H1 (cell line): ENCODE measurements at regions of chr6 and their contacts with region 1.

Region 1: DNA sequence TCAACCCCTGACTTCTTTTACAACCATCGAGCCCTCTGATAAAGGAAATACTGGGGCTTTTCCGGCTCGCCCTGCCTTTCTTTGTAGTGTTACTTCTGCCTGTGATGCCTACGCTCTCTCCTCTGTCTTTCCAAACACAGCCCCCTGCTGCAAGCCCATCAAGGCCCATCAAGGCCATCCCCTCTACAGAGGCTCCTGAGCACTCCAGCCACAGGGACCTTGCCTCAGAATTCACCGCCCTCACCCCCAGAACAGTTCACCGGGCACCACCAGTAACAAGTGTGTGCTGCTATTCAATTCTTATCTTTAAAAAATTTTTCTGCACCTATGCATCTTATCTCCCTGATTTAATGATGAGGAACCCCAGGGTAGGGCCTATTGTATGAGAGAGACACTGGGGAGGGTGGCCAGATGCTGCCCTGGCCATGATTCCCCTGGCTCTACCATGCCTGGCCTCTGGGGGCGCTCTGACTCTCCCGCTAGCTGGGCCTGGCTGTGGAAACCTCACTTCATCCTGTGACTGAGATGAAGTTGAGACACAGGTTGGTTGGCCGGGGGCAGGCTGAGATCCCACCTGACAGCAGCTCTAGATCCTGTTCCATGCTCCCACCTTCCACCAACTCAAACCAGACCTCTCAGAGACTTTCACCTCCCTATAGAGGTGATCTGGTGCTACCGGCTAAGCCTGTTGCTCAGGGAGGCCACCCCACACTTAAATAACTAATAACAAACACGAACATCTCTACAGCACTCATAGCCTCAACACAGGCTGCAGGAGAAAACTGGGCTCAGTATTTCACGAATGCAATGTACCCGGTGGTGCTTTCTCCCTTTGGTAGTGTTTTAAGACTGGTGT is 19.2 kb upstream of the GLP1R start:
- DNase-seq: peak in 1 of 2 experiments; percentile 93
- H3K4me3 ChIP-seq: no peak overlapping the region
- H3K27ac ChIP-seq: no peak overlapping the region
- H3K4me1 ChIP-seq: peaks cover 0 to 4% (median 0%) of the 10 kb centered on the region in 4 experiments; a peak in 1 of 7 replicates
- H3K27me3 ChIP-seq: no peaks in the 10 kb centered on the region; a peak in 1 of 7 replicates
- CTCF ChIP-seq: peak; percentile 81 to 97 (median 97)
- EP300 ChIP-seq: no peak
- POLR2A ChIP-seq: no peak
- RAD21 ChIP-seq: peak; percentile 70 to 79

Region 2: DNA sequence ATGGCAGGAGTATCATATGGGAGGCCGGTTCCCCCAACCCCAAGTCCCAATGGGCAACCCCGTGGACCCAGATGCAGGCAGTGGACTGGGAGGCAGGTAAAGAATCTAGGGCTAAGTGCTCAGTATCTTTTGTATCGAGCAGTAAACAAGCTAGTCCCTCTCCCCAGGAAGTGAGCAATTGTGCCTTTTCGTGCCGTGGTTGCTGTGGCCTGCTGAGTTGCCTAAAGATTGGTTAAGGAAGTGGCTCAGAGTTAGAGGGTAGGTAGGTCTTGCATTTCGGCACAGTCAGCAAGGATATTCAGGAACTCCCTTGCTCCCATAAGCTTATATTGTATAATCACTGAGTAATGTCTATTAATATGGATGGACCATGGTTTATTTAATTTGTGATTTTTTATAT is 315.6 kb before region 1 on chr6:
- CTCF ChIA-PET with region 1: no interaction called
- POLR2A ChIA-PET with region 1: no interaction called
- DNase-seq: no peak
- H3K4me3 ChIP-seq: no peak overlapping the region
- H3K27ac ChIP-seq: no peak overlapping the region
- H3K4me1 ChIP-seq: no peaks in the 10 kb centered on the region
- H3K27me3 ChIP-seq: peaks cover 5 to 21% (median 15%) of the 10 kb centered on the region in 4 experiments; a peak in 6 of 7 replicates
- CTCF ChIP-seq: no peak
- EP300 ChIP-seq: no peak
- POLR2A ChIP-seq: no peak
- RAD21 ChIP-seq: no peak

Region 3: DNA sequence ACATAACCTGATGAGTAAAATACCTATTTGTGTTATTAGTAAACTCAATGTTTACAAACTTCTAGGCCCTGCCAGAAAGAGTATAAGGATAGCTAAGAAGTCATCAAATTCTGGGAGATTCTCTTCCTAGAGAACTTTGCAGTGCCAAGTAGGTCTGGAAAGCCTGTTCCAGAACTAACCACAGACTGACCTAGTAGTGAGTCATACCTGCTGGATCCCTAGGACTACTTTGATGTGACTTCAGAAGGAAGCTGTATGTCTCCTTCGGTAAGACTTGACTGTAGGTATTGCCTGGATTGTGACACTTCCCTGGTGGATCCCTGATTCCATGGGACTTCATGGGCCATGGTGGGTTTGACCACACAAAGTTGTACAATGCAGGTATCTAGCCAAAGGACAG is 182.5 kb before region 1 on chr6:
- CTCF ChIA-PET with region 1: no interaction called
- POLR2A ChIA-PET with region 1: no interaction called
- DNase-seq: no peak
- H3K4me3 ChIP-seq: no peak overlapping the region
- H3K27ac ChIP-seq: no peak overlapping the region
- H3K4me1 ChIP-seq: no peaks in the 10 kb centered on the region
- H3K27me3 ChIP-seq: peaks cover 0 to 1% (median 0%) of the 10 kb centered on the region in 4 experiments; a peak in 1 of 7 replicates
- CTCF ChIP-seq: no peak
- EP300 ChIP-seq: no peak
- POLR2A ChIP-seq: no peak
- RAD21 ChIP-seq: no peak

Region 4: DNA sequence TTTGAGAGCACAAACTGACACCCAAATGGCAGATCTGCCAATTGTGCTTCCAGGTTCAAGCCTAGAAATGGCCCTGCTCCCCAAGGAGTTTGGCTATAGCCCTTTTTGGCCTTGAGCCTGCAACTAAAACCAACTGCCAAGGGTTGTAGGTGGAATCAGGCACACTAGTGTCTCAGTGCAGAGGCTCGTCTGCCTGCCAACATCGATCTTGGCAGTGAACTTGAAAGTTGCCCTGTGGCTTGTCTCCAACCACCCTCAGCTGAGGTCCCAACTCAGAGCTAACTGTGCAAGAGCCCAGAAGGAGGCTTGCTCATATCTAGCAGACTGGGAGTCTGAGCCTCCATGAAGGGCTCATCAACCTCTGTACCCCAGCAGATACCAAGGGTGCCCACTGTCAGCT is 73.5 kb before region 1 on chr6:
- CTCF ChIA-PET with region 1: no interaction called
- POLR2A ChIA-PET with region 1: no interaction called
- DNase-seq: no peak
- H3K4me3 ChIP-seq: no peak overlapping the region
- H3K27ac ChIP-seq: no peak overlapping the region
- H3K4me1 ChIP-seq: no peaks in the 10 kb centered on the region
- H3K27me3 ChIP-seq: no peaks in the 10 kb centered on the region
- CTCF ChIP-seq: no peak
- EP300 ChIP-seq: no peak
- POLR2A ChIP-seq: no peak
- RAD21 ChIP-seq: no peak

Region 5: GRCh38 chr6:39018107-39018506 is 11.3 kb before region 1 on chr6:
- CTCF ChIA-PET with region 1: interaction called, 23 read pairs
- POLR2A ChIA-PET with region 1: no interaction called
- DNase-seq: no peak
- H3K4me3 ChIP-seq: no peak overlapping the region
- H3K27ac ChIP-seq: no peak overlapping the region
- H3K4me1 ChIP-seq: no peaks in the 10 kb centered on the region
- H3K27me3 ChIP-seq: no peaks in the 10 kb centered on the region; a peak in 2 of 7 replicates
- CTCF ChIP-seq: no peak
- EP300 ChIP-seq: no peak
- POLR2A ChIP-seq: no peak
- RAD21 ChIP-seq: no peak

Region 6: GRCh38 chr6:39062014-39062740 is 32.8 kb after region 1 on chr6:
- CTCF ChIA-PET with region 1: interaction called, 28 read pairs
- POLR2A ChIA-PET with region 1: no interaction called
- DNase-seq: no peak
- H3K4me3 ChIP-seq: no peak overlapping the region
- H3K27ac ChIP-seq: no peak overlapping the region
- H3K4me1 ChIP-seq: no peaks in the 10 kb centered on the region
- H3K27me3 ChIP-seq: 0 out of 7 replicates have a peak, but pooled peaks cover 0 to under 1% (median 0%) of the 10 kb centered on the region in 4 experiments
- CTCF ChIP-seq: no peak
- EP300 ChIP-seq: no peak
- POLR2A ChIP-seq: no peak
- RAD21 ChIP-seq: no peak